ENCODE measurements at regions of chr1 and their contacts with region 1.

Region 1: GRCh38 chr1:201229771-201230635 is 39.4 kb downstream of the IGFN1 start:
- DNase-seq: peak; percentile 46
- ATAC-seq: no peak

Region 2: GRCh38 chr1:201028461-201028889 is 201.5 kb before region 1 on chr1:
- intact Hi-C with region 1: no loop called
- DNase-seq: no peak
- ATAC-seq: no peak

Region 3: DNA sequence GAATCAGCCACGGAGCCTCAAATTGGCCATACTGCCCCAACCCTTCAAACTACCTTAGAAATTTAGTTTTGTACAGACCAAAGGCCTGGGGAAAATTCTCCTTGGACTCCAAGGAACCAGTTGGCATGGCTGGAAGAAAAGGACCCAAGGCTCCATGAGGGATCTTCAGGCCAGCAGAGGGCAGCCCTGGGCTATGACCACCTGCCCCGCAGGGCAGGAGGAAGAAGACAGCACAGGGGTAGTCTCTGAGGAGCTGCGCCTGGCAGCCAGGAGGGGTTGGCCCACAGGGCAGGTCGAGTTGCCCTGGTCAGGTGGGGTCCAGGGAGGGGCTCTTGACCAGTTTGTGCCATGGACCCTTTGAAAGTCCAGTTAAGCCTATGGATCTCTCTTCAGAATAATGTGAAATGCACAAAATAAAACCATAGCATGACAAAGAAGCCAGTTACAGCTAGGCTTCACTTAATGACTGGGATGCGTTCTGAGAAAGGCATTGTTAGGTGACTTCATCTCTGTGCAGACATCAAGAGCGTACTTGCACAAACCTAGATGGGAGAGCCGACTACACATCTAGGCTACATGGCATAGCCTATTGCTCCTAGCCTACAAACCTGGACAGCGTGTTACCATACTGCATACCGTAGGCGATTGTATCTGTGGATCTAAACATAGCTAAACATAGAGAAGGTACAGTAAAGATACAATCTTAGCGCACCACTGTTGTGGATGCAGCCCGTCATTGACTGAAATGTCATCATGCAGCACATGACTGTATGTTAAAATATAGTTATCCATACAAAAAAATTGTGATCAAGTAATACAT is 143.9 kb before region 1 on chr1:
- intact Hi-C with region 1: loop called (anchors 10 kb)
- DNase-seq: no peak
- ATAC-seq: peak; percentile 70

Measured in Right ventricle myocardium inferior (tissue), 1 donor.